ENCODE measurements at regions of chr20 and their contacts with region 1.

Region 1: DNA sequence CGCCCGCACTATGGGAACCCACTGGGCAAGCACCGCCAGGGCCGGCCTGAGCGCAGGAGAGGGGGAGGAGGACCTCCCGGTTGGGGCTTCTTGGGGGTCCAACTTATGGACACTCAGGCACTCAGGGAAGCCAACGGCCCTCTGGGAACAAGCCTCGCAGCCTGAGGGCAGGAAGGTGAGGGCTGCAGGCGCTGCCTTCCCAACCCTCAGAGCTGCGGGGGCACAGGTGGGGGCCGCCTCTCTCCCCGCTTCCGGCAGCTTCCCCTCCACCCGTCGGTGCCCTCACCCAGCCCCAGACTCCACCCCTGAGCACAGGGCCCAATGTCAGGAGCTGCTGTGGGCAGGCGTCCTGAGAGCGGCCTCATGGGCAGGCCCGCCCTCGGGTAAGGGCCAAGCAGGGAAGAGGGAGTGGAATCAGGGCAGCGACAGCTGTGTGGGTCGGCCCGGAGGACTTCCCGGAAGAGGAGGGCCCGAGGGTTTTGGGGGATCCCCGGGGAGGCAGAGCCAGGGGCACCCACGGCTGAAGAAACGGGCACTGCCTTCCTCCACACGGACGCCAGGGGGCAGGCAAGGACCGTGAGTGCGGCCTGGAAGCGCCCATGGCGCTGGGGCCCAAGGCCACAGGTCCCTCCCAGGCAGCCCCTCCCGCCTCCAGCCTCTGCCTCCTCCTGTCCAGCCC is 488 bp upstream of the PTK6 start:
- DNase-seq: peak; percentile 91
- ATAC-seq: peak; percentile 87 to 94

Region 2: GRCh38 chr20:63312690-63313348 is 224.8 kb before region 1 on chr20:
- intact Hi-C with region 1: no loop called
- DNase-seq: peak; percentile 60
- ATAC-seq: peak; percentile 54 to 66

Region 3: GRCh38 chr20:63594043-63594561 is 56.4 kb after region 1 on chr20:
- intact Hi-C with region 1: loop called in 1 of 2 experiments (anchors 10 kb)
- DNase-seq: no peak
- ATAC-seq: no peak

Region 4: GRCh38 chr20:63612276-63612928 is 74.7 kb after region 1 on chr20:
- intact Hi-C with region 1: loop called in 1 of 2 experiments (anchors 5 kb)
- DNase-seq: no peak
- ATAC-seq: peak in 1 of 2 donors; percentile 15

Region 5: DNA sequence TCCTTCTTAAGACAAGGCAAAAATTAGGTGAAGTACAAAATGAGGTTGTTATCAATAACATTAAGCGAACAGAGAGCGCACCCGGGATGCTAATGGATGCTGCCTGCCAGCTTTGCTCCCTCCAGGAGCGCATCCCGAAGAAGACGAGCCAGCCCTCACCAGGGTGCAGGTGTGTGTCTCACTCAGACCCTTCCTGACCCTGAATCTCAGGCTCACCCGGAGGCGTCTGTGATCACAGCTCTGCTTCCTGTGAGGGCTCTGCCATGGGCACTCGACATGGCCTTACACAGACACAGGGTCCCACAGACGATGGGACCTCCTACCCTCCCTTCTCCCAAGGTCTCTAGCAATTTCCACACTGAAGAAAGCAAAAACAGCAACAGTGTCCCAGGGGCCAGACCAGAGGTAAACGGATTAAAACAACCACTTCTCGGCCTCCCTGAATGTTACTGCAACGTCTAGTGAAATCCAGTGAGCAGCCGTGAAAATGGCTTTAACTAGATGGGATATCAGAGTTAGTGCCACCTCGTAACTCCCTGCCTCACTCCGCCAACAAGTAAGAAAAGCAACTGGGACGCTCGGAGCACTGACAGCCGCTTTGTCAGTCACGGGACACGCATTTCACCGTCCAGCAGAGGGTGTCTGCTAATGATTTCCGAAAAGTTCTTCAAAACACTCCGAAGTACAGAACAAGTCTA is 281.7 kb after region 1 on chr20:
- intact Hi-C with region 1: no loop called
- DNase-seq: peak; percentile 50
- ATAC-seq: peak in 1 of 2 donors; percentile 11

Region 6: GRCh38 chr20:63873477-63873971 is 335.9 kb after region 1 on chr20:
- intact Hi-C with region 1: loop called in 1 of 2 experiments (anchors 10 kb)
- DNase-seq: peak; percentile 60
- ATAC-seq: peak; percentile 85 to 91

Region 7: DNA sequence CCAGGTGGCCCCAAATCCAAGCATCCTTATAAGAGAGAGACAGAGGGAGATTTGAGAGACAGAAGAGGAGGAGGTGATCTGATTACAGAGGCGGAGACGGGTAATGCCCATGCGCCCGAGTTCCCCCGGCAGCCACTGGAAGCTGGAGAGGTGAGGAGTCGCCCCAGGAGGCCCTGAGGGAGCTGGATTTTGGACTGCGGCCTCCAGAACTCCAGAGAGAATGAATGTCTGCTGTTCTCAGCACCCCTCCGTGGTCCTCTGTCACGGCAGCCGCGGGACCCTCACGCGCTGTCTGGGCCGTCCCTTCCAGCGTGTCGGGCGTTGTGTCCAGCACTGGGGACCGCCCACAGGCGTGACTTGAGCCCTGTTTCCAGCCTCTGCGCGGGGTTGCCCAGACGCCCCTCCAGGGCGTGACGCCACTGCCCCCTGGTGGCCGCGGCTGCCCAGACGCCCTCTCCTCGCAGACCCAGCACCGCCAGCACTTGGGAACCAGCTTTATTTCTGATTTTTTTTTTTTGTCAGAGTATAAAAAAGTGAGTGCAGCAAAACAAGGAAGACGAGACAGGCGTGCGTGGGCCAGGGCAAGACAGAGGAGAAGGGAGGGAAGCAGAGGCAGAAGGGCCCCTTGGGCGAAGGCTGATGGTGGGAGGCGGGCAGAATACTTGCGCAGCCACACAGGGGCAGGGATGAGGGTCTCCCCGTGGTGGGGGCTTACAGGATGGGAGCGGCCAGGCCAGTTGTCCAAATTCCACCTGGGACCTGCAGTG is 436.2 kb after region 1 on chr20:
- intact Hi-C with region 1: loop called (anchors 5 kb)
- DNase-seq: peak; percentile 92
- ATAC-seq: peak; percentile 82 to 85

Region 8: DNA sequence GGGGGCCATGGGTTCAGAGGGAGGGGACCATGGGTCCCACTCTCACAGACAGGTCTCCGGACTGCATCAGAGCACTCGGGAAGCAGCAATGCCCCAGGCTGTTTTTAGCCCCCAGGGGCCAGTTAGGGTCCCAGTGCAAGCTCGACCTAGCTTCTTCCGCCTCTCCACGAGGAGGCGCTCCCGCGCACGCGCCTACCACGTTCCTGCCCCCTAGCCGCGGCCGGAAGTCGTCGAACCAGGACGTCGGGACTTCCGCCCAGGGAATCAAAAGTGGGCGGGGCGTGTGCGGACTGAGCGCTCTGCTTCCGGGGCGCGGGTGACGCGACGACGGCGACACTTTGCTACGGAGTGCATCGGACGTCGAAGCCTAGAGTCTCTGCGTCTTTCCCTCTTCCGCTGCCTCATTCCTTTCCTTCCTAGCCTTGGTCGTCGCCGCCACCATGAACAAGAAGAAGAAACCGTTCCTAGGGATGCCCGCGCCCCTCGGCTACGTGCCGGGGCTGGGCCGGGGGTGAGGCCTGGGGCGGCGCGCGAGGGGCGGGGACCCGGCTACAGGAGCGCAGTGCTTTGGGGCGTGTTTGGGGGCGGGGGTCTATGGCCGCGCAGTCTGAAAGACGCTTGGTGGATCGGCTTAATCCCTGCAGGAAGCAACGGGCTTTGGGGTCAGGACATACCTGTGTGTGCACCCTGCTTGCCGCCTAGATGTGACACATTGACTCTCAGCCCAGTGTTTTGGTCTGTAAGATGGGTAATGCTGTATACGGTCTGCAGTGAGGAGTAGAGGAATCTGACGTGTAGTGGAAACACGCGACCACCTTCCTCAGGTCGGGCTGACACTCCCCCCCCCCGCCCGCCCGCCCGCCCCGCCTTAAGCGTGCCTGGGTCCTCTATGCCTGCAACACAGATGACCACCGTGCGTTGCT is 443.4 kb after region 1 on chr20 and contains the start of gene PRPF6:
- intact Hi-C with region 1: loop called in 1 of 2 experiments (anchors 5 kb)
- DNase-seq: peak; percentile 96
- ATAC-seq: peak; percentile 91 to 92
- total RNA-seq, gene PRPF6: 38.8 to 43.9 TPM